Activated T-helper 1 cell treated with anti-CD3 and anti-CD28 coated beads, Interleukin-12 subunit alpha, Interleukin-12 subunit beta, Interleukin-2, Interleukin-4 antibody, amounts not matched to agents 30 ng/mL and 10 ng/mL and 1 ng/mL, durations not matched to agents 14 hours and 24 hours and 36 hours (primary cell): ENCODE measurements at regions of chr2 and their contacts with region 1.

Region 1: DNA sequence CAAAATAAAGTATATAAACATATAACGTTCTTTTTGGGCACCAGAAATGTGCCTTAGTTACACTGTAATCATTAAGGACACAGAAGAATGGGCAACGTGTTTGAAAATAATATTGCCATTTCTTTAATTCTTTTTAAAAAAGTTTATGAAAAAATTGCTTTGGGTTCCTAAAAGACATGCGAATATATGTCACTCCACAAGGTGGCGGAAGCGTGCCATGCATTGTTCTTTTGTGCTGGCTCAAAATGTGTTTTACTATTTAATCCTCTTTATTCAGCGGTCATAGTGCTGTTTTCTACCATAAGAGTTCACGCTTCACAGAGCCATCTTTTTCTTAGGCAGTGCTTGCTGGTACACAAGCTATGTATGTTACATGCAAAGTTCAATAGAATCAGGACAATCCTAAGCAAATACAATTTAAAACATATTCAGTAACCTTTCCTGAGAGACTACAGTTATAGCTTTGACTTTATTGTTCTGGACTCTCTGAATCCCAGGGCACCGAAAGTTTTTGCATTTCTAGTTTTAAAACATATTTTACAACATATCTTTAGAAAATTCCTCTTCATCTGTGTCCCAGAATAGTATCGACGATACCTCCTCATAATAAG is 147.8 kb upstream of the ERBB4 start:
- DNase-seq: peak; percentile 3
- H3K4me3 Mint-ChIP-seq: no peak overlapping the region
- H3K27ac Mint-ChIP-seq: no peak overlapping the region
- H3K4me1 Mint-ChIP-seq: no peaks in the 10 kb centered on the region
- H3K27me3 Mint-ChIP-seq: peaks cover under 1% of the 10 kb centered on the region

Region 2: DNA sequence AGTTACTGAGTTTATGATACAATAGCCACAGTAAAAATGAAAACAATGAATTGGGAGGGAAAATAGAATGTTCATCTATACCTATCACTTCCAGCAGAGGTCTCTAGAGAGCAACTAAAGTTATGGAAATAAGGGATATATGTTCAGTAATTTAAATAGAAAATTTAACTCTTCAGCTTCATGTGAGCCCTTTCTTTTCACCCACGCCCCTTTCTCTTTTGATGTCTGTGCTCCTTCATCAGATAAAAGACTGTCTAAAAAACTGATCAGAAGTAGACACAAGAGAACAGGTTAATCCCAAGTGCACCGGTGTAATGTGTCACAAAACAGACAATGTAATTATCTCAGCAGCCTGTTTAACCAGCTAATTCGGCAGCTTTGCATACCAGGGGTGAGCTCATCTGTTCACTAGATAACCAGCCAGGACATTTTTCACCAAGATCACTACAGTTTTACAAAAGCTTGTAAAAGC is 90.7 kb after region 1 on chr2:
- intact Hi-C with region 1: loop called (anchors 2 kb)
- DNase-seq: no peak
- H3K4me3 Mint-ChIP-seq: no peak overlapping the region
- H3K27ac Mint-ChIP-seq: no peak overlapping the region
- H3K4me1 Mint-ChIP-seq: no peaks in the 10 kb centered on the region
- H3K27me3 Mint-ChIP-seq: no peaks in the 10 kb centered on the region

Region 3: DNA sequence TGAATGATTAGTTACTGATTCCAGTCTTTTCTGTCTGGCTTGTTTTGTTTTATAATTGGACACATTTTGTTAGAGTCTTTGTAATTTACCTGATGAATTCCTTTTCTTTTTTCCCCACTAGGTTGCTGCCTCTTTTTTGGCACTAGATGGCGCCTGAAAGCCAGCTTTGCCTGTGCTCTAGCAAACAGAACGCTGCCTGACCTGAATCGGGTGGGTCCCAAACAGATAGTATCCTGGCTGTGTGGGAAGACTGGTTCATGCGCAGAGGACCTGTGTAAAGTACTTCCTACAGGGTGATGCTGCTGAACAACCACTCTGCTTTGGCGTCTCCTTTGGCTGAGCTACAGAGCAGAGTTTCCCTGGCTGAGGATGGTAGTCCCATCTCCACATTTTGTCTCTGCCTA is 176.8 kb after region 1 on chr2:
- intact Hi-C with region 1: loop called (anchors 2 kb)
- DNase-seq: no peak
- H3K4me3 Mint-ChIP-seq: no peak overlapping the region
- H3K27ac Mint-ChIP-seq: no peak overlapping the region
- H3K4me1 Mint-ChIP-seq: no peaks in the 10 kb centered on the region
- H3K27me3 Mint-ChIP-seq: no peaks in the 10 kb centered on the region